ENCODE measurements at regions of chr5 and their contacts with region 1.

Region 1: GRCh38 chr5:139262742-139263445 is 30.6 kb upstream of the MATR3 start:
- DNase-seq: peak; percentile 89
- ATAC-seq: peak; percentile 100

Region 2: GRCh38 chr5:138583984-138584637 is 678.8 kb before region 1 on chr5:
- intact Hi-C with region 1: loop called (anchors 5 to 10 kb)
- DNase-seq: no peak
- ATAC-seq: no peak

Region 3: GRCh38 chr5:139022528-139022927 is 240.4 kb before region 1 on chr5:
- intact Hi-C with region 1: no loop called
- DNase-seq: no peak
- ATAC-seq: peak in 1 of 2 donors; percentile 61

Region 4: GRCh38 chr5:139091439-139092156 is 171.3 kb before region 1 on chr5:
- intact Hi-C with region 1: loop called (anchors 5 kb)
- DNase-seq: no peak
- ATAC-seq: peak; percentile 67 to 96